Posterior vena cava (tissue), 2 donors: ENCODE measurements at regions of chr1 and their contacts with region 1.

Region 1: DNA sequence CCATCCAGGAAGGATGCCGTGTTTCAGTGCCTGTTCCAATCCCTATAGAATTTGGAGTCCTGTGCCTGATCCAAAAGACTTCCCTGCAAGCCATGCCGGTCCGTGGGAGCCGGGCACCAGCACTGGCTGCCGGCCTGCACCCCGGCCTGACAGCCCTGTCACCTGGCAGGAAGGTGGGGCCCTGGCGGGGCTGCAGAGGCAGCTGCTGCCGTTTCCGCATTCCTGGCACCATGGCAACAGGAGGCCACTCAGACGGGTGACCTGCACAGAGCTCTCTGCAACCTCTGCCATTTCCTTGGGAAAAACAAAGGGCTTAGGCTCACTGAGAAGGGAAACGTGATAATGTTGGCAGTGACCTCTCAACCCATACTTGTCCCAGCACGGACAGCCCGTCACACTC is 63.2 kb upstream of the TMEM51 start:
- DNase-seq: peak; percentile 78

Region 2: GRCh38 chr1:15114884-15115283 is 24.5 kb after region 1 on chr1:
- intact Hi-C with region 1: loop called in 1 of 2 experiments (anchors 1 kb)
- DNase-seq: no peak